SK-N-SH (cell line): ENCODE measurements at regions of chr2 and their contacts with region 1.

Region 1: DNA sequence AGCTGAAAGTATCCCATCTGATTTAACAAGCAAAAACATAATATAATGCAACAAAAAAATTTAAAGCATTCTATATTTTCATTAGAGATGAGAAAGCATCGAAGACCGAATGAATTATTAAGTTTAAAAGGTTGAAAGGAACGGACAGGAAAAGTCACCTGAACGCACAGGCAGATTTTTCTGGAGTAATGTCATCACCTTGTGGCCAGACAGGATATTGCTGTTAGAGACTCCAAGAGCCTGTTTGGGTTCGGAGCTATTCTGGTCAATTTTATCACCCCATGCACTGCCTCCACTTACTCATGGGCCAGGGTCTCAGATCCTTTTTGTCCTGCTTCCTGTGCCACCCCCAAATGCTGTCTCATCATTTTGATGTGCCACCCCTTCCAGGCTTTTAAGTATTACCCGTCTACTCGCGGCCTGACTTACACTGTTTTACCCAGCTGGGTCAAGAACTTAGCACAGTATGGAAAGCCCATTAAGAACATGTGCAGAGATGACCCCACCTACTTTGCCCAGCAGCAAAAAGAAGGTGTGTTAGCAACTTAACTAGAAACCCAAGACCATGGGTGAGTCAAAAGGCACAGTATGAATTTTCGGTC is 27.3 kb downstream of the GKN2 start:
- DNase-seq: peak; percentile 55
- H3K4me3 ChIP-seq: no peak overlapping the region; a peak in 1 of 4 replicates
- H3K27ac ChIP-seq: no peak overlapping the region
- H3K4me1 ChIP-seq: no peaks in the 10 kb centered on the region
- H3K27me3 ChIP-seq: no peaks in the 10 kb centered on the region; the same call in 1 of the 2 replicates
- CTCF ChIP-seq: peak; percentile 89
- EP300 ChIP-seq: no peak
- RAD21 ChIP-seq: peak; percentile 94

Region 2: DNA sequence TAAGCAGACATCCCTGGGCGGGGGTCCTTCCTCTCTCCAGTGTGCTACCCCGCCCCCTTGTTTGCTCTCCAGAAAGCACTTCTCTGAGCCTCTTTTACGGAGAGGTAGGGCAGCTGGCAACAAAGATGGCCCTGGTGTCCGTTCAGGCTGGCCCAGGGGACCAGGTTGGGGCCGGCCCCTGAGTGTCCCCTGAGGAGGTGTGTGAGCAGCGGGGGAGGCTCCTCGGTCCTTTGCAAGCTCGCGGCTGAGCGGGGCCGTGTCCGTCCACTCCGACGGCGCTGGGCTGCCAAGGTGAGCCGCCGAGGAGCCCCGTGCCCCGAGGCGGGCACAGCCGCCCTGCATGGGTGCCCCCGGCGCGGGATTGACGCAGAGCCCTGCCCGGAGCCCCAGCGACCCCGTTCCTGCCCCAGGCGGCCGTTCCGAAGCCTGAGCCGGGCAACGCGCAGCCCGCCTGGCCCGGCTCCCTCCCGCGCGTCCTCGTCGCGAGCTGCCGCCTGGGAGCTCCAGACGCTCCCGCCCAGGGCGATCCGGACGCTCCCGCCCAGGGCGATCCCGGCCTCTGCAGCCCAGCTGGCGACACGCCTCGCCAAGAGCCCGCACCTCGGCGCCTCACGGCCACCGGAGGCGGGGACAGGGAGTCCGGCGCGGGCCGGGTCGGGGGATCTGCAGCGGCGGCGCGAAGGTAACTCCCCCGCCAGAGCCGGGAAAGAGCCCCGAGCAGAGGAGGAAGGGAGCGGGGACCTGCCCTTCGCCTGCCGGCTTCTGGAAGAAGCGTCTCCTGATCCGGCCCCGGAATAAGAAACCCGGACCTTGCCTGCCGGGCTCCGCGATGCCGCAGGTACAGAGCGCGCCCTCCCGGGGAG is 282.2 kb before region 1 on chr2 and contains the start of gene PROKR1:
- CTCF ChIA-PET with region 1: interaction called, 16 read pairs
- POLR2A ChIA-PET with region 1: no interaction called
- DNase-seq: peak; percentile 78
- H3K4me3 ChIP-seq: peak within 1 kb of the TSS; percentile 49 to 54
- H3K27ac ChIP-seq: no peak within 1 kb of the TSS
- H3K4me1 ChIP-seq: no peaks in the 10 kb centered on the region; a peak in 1 of 4 replicates
- H3K27me3 ChIP-seq: peaks cover 41% of the 10 kb centered on the region
- CTCF ChIP-seq: no peak
- EP300 ChIP-seq: no peak
- RAD21 ChIP-seq: no peak; the same call in 1 of the 2 replicates
- polyA plus RNA-seq, gene PROKR1: not detected in 2 replicates

Region 3: DNA sequence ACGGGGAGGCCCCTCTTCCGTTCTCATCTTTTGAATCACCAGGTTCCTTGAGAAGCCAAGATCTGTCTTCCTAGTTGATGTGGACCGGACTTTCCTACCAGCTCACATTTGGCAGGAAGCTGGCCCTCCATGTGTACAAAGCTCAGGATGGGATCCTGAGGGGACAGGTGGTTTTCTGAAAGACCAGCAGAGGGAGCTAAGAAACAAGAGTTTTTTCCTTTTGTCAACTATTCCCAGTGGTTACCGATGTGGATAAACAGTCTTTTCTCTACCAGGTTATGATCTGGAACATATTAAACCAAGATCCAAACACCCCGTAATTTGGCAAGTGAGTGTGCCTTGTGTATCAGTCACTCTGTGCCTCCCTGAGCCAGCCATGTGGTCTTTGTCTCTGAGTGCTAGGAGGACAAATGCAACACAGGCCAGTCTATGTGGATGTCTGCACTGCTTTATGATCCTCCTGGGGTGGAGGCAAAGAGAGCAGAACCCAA is 215.9 kb before region 1 on chr2:
- CTCF ChIA-PET with region 1: interaction called, 61 read pairs
- POLR2A ChIA-PET with region 1: no interaction called
- DNase-seq: peak; percentile 52
- H3K4me3 ChIP-seq: no peak overlapping the region
- H3K27ac ChIP-seq: peak overlapping the region in 1 of 2 experiments; percentile 53; a peak in 2 of 4 replicates
- H3K4me1 ChIP-seq: peaks cover 5 to 6% of the 10 kb centered on the region in 2 experiments; a peak in 3 of 4 replicates
- H3K27me3 ChIP-seq: peaks cover 9% of the 10 kb centered on the region; the same call in 1 of the 2 replicates
- CTCF ChIP-seq: peak; percentile 76
- EP300 ChIP-seq: no peak
- RAD21 ChIP-seq: peak; percentile 72

Region 4: DNA sequence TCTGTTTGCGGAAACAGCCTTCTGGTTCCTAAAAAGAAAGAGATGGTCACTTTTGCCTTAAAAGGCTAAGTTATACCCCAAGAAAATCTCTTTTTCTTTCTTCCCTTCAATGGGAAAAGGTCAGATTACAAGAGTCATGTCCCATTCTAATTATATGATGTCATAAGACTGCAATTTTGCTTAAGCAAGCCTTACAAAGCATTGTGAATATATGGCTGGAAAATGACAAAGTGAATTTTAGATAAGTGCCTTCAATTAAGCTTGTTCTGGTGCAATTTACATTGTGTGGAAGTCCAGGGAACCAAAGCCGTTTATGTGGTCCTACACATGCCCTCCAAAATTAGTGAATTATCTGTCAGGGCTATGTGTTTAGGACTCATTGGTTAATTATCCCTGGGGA is 46.6 kb before region 1 on chr2:
- CTCF ChIA-PET with region 1: interaction called, 10 read pairs
- POLR2A ChIA-PET with region 1: no interaction called
- DNase-seq: no peak
- H3K4me3 ChIP-seq: no peak overlapping the region
- H3K27ac ChIP-seq: no peak overlapping the region
- H3K4me1 ChIP-seq: 0 out of 4 replicates have a peak, but pooled peaks cover 0 to 7% of the 10 kb centered on the region in 2 experiments
- H3K27me3 ChIP-seq: no peaks in the 10 kb centered on the region
- CTCF ChIP-seq: no peak
- EP300 ChIP-seq: no peak
- RAD21 ChIP-seq: no peak

Region 5: GRCh38 chr2:68936427-68936826 is 11.0 kb after region 1 on chr2:
- CTCF ChIA-PET with region 1: interaction called, 59 read pairs
- POLR2A ChIA-PET with region 1: interaction called, 3 read pairs
- DNase-seq: no peak
- H3K4me3 ChIP-seq: no peak overlapping the region
- H3K27ac ChIP-seq: peak overlapping the region; percentile 48 to 50; a peak in 3 of 4 replicates
- H3K4me1 ChIP-seq: peaks cover 2 to 24% of the 10 kb centered on the region in 2 experiments; a peak in 3 of 4 replicates
- H3K27me3 ChIP-seq: no peaks in the 10 kb centered on the region
- CTCF ChIP-seq: no peak
- EP300 ChIP-seq: no peak
- RAD21 ChIP-seq: no peak